ENCODE measurements at regions of chr4 and their contacts with region 1.

Region 1: GRCh38 chr4:74157561-74158465 is at the start of gene MTHFD2L:
- DNase-seq: peak; percentile 92
- ATAC-seq: peak; percentile 99
- H3K4me3 Mint-ChIP-seq: peak within 1 kb of the TSS; percentile 91
- H3K27ac Mint-ChIP-seq: peak within 1 kb of the TSS; percentile 93
- H3K4me1 Mint-ChIP-seq: peaks cover 19% of the 10 kb centered on the region
- H3K27me3 Mint-ChIP-seq: peaks cover 3% of the 10 kb centered on the region
- total RNA-seq, gene MTHFD2L: 6.4 to 6.9 TPM

Region 2: DNA sequence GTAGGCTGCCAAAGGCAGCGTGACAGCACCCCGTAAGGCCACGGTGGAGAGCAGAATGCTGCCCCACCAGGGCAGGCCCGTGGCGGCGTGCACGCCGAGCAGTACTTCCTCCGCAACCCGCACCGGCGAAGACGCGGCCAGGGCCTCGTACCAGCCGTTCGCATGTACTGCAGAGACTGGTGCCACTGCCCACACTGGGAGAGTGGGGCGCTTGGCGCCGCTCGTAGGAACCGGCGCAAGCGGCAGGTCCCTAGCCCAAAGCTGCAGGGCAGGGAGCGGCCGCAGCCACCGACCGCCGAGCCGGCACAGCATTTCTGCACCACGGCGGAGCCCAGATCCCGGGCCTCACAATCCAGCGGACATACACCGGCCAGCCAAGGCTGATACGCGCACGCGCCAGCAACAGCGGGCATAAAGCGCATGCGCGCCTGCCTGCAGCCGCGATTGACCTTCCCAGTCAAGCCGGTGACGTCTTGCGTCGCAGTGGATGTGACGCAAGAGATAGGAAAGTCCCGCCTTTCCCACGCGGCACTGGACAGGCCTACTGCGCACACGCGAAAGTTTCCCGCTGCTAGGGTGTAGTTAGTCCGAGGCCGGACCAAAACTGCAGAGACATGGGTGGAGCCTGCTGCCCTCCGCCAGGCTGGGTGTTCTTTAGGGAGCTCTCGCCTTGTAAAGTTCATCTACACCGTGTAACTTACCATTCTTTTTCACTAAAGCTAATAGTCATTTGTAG is 1088.3 kb before region 1 on chr4 and contains the start of gene COX18:
- CTCF ChIA-PET with region 1: no interaction called
- POLR2A ChIA-PET with region 1: no interaction called
- intact Hi-C with region 1: loop called in 1 of 2 experiments (anchors 5 kb)
- DNase-seq: peak; percentile 96
- ATAC-seq: peak; percentile 77
- H3K4me3 Mint-ChIP-seq: peak within 1 kb of the TSS; percentile 84
- H3K27ac Mint-ChIP-seq: peak within 1 kb of the TSS; percentile 100
- H3K4me1 Mint-ChIP-seq: peaks cover 34% of the 10 kb centered on the region
- H3K27me3 Mint-ChIP-seq: no peaks in the 10 kb centered on the region
- total RNA-seq, gene COX18: 17.9 to 21.3 TPM

Region 3: GRCh38 chr4:74109116-74109869 is 48.5 kb before region 1 on chr4:
- CTCF ChIA-PET with region 1: no interaction called
- POLR2A ChIA-PET with region 1: no interaction called
- intact Hi-C with region 1: no loop called
- DNase-seq: no peak
- ATAC-seq: no peak
- H3K4me3 Mint-ChIP-seq: no peak overlapping the region
- H3K27ac Mint-ChIP-seq: no peak overlapping the region
- H3K4me1 Mint-ChIP-seq: no peaks in the 10 kb centered on the region
- H3K27me3 Mint-ChIP-seq: peaks cover 2% of the 10 kb centered on the region

Region 4: DNA sequence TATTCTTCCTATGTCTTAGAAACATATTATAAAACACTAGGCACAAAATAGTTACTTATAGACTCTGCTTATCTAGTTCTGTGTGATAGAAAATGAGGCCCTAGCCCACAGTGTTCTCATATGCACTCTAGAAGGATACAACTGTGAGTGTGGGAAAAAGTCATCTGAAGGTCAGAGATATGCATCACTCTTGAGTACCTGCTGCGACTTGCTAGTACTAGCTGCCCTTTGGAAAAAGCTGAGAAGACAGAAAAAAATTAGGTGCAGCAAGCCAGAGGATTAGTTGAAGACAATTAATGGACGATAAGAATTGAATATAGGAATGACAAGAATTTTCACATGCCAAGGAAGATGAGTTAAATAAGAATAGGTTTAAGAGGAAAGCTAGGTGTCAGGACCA is 61.4 kb after region 1 on chr4:
- CTCF ChIA-PET with region 1: no interaction called
- POLR2A ChIA-PET with region 1: no interaction called
- intact Hi-C with region 1: no loop called
- DNase-seq: no peak
- ATAC-seq: no peak
- H3K4me3 Mint-ChIP-seq: no peak overlapping the region
- H3K27ac Mint-ChIP-seq: no peak overlapping the region
- H3K4me1 Mint-ChIP-seq: peaks cover 2% of the 10 kb centered on the region
- H3K27me3 Mint-ChIP-seq: no peaks in the 10 kb centered on the region